Endothelial cell of umbilical vein (primary cell): ENCODE measurements at regions of chr12 and their contacts with region 1.

Region 1: DNA sequence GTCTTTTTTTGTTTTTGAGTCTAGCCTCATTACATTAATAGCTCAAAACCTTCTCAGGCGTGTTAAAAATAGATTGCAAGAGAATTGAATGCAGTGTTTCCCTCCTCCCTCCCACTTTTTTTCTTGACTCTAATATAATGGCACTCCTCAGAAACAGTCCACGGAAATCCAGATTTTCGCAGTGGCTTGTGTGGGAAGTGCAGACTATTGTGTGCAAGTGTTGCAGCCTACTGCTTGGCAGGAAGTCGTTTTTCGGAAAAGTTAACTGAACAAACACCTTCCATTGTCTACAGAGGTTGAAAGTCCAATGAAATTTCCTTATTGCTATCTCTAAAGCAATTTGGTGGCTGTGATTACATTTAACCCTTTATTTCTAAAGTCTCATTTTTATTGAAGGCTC is 147.9 kb upstream of the E2F7 start:
- DNase-seq: peak; percentile 98
- H3K4me3 ChIP-seq: no peak overlapping the region
- H3K27ac ChIP-seq: peak overlapping the region; percentile 28
- H3K4me1 ChIP-seq: peaks cover 15% of the 10 kb centered on the region
- H3K27me3 ChIP-seq: peaks cover 3% of the 10 kb centered on the region in 2 experiments
- CTCF ChIP-seq: peak in 1 of 2 donors; percentile 14
- POLR2A ChIP-seq: no peak

Region 2: DNA sequence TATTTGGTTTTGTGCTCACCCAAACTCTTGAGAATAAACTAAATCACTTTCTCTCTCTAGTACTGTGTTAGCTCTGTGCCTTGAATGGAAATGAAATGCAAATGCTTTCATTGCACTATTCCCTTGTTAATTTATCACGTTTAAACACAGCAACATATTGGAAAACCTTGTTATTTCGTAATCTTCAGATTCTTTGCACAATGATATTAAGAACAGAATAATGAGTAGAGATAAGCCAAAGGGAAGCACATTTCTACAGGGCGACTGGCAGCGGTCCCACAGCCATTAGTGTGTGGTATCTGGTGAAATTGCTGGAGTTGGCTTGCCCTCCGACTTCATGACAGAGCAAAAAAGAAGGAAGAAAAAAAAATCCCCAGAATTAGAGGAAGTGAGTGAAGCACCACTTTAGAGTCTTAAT is 18.2 kb after region 1 on chr12:
- CTCF ChIA-PET with region 1: interaction called, 3 read pairs
- POLR2A ChIA-PET with region 1: interaction called, 3 read pairs
- dilution Hi-C with region 1: no loop called
- intact Hi-C with region 1: loop called (anchors 1 kb)
- DNase-seq: peak; percentile 93
- H3K4me3 ChIP-seq: no peak overlapping the region
- H3K27ac ChIP-seq: no peak overlapping the region
- H3K4me1 ChIP-seq: peaks cover 30% of the 10 kb centered on the region
- H3K27me3 ChIP-seq: peaks cover 9 to 10% of the 10 kb centered on the region in 2 experiments
- CTCF ChIP-seq: no peak
- POLR2A ChIP-seq: no peak

Region 3: GRCh38 chr12:77308056-77308455 is 94.7 kb after region 1 on chr12:
- CTCF ChIA-PET with region 1: no interaction called
- POLR2A ChIA-PET with region 1: no interaction called
- dilution Hi-C with region 1: no loop called
- intact Hi-C with region 1: no loop called
- DNase-seq: no peak
- H3K4me3 ChIP-seq: no peak overlapping the region
- H3K27ac ChIP-seq: no peak overlapping the region
- H3K4me1 ChIP-seq: no peaks in the 10 kb centered on the region
- H3K27me3 ChIP-seq: no peaks in the 10 kb centered on the region
- CTCF ChIP-seq: no peak
- POLR2A ChIP-seq: no peak

Region 4: DNA sequence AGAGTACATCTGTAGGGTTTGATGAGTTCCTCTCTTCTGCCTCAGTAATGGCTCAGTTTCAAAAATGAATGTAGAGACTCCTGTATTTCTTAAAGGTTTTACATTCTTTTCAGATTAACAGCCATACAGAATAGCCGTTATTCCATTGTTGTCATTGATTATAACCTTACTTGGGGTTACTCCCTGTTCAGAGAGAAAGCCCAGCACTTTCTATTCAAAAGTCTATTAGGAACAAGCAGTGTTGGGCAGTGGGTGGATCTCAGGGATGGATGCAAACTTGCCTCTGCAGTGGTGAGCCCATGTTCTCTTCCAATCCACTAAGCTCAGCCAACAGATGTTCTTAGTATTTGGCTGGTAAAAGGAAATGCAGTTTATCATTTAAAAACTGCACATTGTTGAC is 194.6 kb after region 1 on chr12:
- CTCF ChIA-PET with region 1: no interaction called
- POLR2A ChIA-PET with region 1: no interaction called
- dilution Hi-C with region 1: no loop called
- intact Hi-C with region 1: loop called (anchors 5 kb)
- DNase-seq: no peak
- H3K4me3 ChIP-seq: no peak overlapping the region
- H3K27ac ChIP-seq: no peak overlapping the region
- H3K4me1 ChIP-seq: peaks cover 10% of the 10 kb centered on the region
- H3K27me3 ChIP-seq: no peaks in the 10 kb centered on the region
- CTCF ChIP-seq: no peak
- POLR2A ChIP-seq: no peak

Region 5: DNA sequence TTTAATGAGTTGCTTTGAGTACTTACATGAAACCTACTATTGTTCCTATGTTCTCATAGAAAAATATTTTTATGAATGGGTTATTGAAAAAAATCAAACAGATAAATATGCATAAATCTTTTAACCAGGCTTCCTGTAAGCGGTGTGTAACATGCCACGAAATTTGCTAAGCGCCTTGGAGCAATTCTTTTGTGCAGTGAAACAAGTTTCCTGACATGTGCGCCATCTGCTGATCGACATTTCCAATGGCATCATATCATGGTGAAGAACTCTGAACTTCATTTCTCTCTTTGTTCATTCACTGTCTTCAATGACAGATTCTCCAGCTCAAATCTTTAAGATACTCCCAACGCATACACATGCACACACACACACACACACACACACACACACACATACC is 471.8 kb after region 1 on chr12:
- CTCF ChIA-PET with region 1: interaction called, 4 read pairs
- POLR2A ChIA-PET with region 1: no interaction called
- dilution Hi-C with region 1: no loop called
- intact Hi-C with region 1: loop called (anchors 5 kb)
- DNase-seq: peak; percentile 80
- H3K4me3 ChIP-seq: no peak overlapping the region
- H3K27ac ChIP-seq: no peak overlapping the region
- H3K4me1 ChIP-seq: peaks cover 2% of the 10 kb centered on the region
- H3K27me3 ChIP-seq: peaks cover 0 to under 1% of the 10 kb centered on the region in 2 experiments
- CTCF ChIP-seq: peak; percentile 54 to 57
- POLR2A ChIP-seq: no peak